B cell (primary cell): ENCODE measurements at regions of chr1 and their contacts with region 1.

Region 1: DNA sequence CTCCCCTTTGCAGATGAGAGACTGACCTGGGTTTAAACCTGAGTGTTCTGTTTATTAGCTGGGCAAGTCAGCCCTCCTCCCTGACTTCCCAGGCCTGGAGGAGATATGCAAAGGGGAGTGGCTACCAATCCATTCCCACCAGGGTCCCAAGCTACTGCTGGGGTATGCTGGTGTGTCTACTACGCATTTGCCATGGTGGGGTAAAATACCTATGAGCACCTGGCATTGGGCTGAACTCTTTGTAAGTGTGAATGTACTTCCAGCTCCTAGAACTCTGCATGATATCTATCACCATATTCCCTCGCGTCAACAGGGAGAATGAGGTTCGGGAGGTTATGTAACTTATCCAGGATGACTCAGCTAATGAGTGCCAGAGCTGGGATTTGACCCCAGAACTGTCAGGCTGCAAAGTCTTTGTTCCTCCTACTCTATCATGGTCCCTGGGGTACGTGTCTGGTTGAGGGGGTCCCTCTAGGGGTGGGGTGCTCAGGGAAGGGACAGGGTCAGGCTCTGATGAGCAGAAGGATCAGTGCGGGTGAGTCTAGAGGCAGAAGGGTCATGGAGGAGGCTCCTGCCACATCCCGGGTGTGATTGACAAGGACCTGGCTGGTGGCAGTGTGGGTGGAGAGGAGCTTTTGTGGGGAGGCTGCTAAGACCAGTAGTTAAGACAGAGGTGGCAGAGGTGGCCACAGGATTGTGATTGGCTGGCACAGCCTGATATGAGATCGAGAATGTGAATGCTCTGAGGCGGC is 16.7 kb downstream of the AMPD2 start:
- DNase-seq: peak; percentile 6
- ATAC-seq: no peak
- H3K4me3 ChIP-seq: no peak overlapping the region
- H3K4me3 Mint-ChIP-seq: no peak overlapping the region
- H3K27ac ChIP-seq: no peak overlapping the region
- H3K27ac Mint-ChIP-seq: no peak overlapping the region
- H3K4me1 ChIP-seq: peaks cover 0 to 7% of the 10 kb centered on the region in 2 donors
- H3K4me1 Mint-ChIP-seq: peaks cover 10% of the 10 kb centered on the region
- H3K27me3 ChIP-seq: peaks cover 0 to 2% (median 0%) of the 10 kb centered on the region in 4 experiments
- H3K27me3 Mint-ChIP-seq: peaks cover 4% of the 10 kb centered on the region
- CTCF ChIP-seq: no peak

Region 2: DNA sequence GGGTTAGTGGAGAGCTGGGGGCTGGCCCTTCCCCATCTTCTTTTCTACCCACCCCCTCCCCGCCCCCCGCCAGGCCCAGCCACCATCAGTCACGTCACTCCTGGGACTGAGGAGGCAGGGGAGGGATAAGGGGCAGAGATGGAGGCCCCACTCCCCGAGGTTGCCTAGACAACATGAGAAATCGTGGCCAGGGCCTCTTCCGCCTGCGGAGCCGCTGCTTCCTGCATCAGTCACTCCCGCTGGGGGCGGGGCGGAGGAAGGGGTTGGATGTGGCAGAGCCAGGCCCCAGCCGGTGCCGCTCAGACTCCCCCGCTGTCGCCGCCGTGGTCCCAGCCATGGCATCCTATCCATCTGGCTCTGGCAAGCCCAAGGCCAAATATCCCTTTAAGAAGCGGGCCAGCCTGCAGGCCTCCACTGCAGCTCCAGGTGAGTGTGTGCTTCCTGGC is 15.5 kb before region 1 on chr1:
- CTCF ChIA-PET with region 1: interaction called, 64 read pairs
- POLR2A ChIA-PET with region 1: no interaction called
- intact Hi-C with region 1: no loop called
- DNase-seq: peak; percentile 86
- ATAC-seq: peak; percentile 59
- H3K4me3 ChIP-seq: peak overlapping the region; percentile 65 to 94 (median 84)
- H3K4me3 Mint-ChIP-seq: peak overlapping the region; percentile 99
- H3K27ac ChIP-seq: peak overlapping the region; percentile 64 to 90
- H3K27ac Mint-ChIP-seq: peak overlapping the region; percentile 96
- H3K4me1 ChIP-seq: peaks cover 50 to 65% of the 10 kb centered on the region in 2 donors
- H3K4me1 Mint-ChIP-seq: peaks cover 72% of the 10 kb centered on the region
- H3K27me3 ChIP-seq: no peaks in the 10 kb centered on the region
- H3K27me3 Mint-ChIP-seq: no peaks in the 10 kb centered on the region
- CTCF ChIP-seq: no peak